ENCODE measurements at regions of chr20 and their contacts with region 1.

Region 1: DNA sequence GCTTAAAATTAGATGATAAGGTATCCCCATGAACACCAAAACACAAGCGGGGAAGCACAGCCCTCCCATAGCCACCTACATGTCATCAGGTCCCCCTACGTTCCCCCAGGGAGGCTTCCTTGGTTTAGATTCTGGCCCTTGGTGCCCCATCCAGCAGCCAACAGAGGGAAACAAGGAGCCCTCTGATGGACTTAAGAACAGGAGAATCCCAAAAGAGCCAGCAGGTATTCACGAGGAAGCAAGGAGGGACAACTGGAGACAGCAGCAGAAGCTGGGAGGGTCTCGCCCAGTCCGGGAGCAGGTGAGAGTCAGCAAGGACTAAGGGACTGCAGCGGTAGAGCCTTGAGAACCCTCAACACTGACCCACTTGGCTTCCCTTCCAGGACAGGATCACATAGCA is 58.4 kb upstream of the TOP1 start:
- DNase-seq: no peak
- H3K4me3 ChIP-seq: no peak overlapping the region
- H3K27ac ChIP-seq: no peak overlapping the region
- H3K4me1 ChIP-seq: peaks cover 0 to 2% of the 10 kb centered on the region in 2 experiments; a peak in 1 of 4 replicates
- H3K27me3 ChIP-seq: no peaks in the 10 kb centered on the region
- CTCF ChIP-seq: no peak
- EP300 ChIP-seq: no peak
- RAD21 ChIP-seq: no peak

Region 2: DNA sequence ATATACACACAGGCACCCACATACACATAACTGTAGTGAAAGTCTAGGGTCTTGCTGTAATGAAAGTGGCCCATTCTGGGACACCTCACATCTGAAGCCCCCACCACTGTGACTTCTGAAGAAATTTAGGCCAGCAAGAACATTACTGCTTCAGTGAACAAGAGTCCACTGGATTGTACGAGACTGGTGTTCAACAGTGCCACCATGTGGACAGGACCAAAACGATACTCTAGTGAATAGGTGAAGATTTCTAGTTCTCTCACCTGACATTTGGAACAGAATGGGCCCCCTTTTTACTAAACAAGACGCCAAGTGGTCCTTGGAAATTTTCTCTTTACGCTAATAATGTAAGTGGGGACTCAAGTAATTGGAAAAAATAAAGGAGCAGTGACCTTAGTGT is 438.1 kb before region 1 on chr20:
- CTCF ChIA-PET with region 1: no interaction called
- POLR2A ChIA-PET with region 1: no interaction called
- DNase-seq: no peak
- H3K4me3 ChIP-seq: no peak overlapping the region
- H3K27ac ChIP-seq: no peak overlapping the region
- H3K4me1 ChIP-seq: no peaks in the 10 kb centered on the region
- H3K27me3 ChIP-seq: peaks cover 3% of the 10 kb centered on the region; the same call in 1 of the 2 replicates
- CTCF ChIP-seq: peak; percentile 51
- EP300 ChIP-seq: no peak
- RAD21 ChIP-seq: peak; percentile 24

Region 3: GRCh38 chr20:40980106-40980827 is 10.1 kb after region 1 on chr20:
- CTCF ChIA-PET with region 1: interaction called, 14 read pairs
- POLR2A ChIA-PET with region 1: no interaction called
- DNase-seq: no peak
- H3K4me3 ChIP-seq: no peak overlapping the region
- H3K27ac ChIP-seq: no peak overlapping the region
- H3K4me1 ChIP-seq: no peaks in the 10 kb centered on the region
- H3K27me3 ChIP-seq: no peaks in the 10 kb centered on the region
- CTCF ChIP-seq: no peak
- EP300 ChIP-seq: no peak
- RAD21 ChIP-seq: no peak